H1 (cell line): ENCODE measurements at regions of chr5 and their contacts with region 1.

Region 1: DNA sequence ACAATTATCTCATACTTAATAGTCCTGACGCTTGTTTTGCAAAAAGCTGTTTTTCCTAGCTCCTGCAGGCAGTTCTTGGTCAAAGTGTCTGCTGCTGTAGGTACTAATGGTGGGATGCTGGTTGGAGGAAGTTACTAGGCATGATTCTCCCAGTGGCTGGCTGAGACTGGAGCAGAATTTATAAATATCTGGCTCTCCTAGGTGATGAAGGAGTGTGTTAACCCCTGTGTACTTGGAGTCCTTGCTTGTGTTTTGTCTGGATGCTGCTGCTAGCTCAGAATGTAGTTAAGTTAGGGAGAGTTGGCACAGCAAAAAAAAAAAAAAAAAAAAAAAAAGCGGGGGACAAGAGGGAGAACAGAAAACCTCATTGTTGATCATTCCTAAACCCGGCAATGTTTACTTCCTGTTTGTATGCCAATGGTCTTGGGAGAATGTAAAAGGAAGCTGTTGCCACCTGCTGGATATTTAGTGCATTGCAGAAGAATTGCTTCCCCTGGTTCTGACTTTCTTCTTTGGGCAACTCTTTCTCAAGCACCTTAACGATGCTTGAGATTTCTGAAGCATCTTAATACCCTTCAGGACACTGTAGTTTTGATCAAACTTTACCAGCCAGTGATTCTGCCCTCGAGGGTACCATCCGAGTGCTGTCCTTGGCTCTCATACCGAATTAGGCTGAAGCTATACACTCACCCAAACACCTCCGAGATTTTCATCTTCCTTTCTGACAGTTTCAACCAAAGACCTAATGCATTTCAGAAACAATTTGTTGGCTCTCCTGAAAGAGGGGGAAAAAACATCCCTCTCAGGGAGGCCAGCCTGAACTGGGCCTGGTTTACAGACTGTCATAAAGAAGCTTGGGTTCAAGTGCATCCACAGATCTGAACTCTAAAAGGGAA is 71.7 kb upstream of the WWC1 start:
- DNase-seq: peak; percentile 51 to 71
- H3K4me3 ChIP-seq: no peak overlapping the region
- H3K27ac ChIP-seq: peak overlapping the region; percentile 62
- H3K4me1 ChIP-seq: peaks cover 6 to 21% (median 13%) of the 10 kb centered on the region in 4 experiments
- H3K27me3 ChIP-seq: no peaks in the 10 kb centered on the region
- CTCF ChIP-seq: peak in 2 of 3 experiments; percentile 88 to 90; a peak in 3 of 4 replicates
- EP300 ChIP-seq: no peak
- POLR2A ChIP-seq: no peak
- RAD21 ChIP-seq: peak; percentile 95 to 97

Region 2: DNA sequence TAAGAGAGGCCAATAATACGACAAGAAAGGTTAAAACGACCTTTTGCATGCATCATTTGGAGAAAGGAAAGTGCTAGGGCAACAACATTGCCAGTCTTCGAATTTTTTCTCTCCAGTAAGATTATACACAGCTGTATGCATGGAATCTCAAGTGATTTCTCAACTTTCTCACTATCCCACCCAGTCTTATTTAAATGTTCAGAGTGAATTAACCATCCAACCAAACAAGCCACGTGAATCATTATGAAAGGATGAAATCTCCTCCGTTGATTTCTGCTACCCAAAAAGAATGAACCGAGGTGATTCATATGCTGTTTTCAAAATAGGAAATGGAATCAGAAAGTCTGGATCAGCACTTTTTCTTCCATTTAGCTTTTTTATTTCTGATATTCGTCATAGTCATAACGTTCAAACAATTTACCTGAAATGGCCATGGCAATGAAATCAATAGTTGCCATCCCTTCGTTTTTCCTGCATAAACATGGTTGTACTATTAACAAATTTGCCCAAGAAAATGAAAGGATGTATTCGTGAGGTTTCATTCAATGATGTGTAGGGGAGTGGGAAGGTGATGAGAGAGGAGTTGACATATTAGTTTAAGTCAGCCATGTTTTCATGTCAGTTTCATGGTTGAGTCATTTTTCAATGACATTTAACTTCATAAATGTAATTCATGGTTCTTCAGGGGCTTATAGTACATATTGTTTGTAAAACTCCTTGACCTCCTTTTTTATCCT is 99.2 kb before region 1 on chr5:
- CTCF ChIA-PET with region 1: interaction called, 38 read pairs
- POLR2A ChIA-PET with region 1: no interaction called
- DNase-seq: no peak
- H3K4me3 ChIP-seq: no peak overlapping the region
- H3K27ac ChIP-seq: no peak overlapping the region
- H3K4me1 ChIP-seq: peaks cover 3 to 7% (median 3%) of the 10 kb centered on the region in 4 experiments; a peak in 6 of 7 replicates
- H3K27me3 ChIP-seq: no peaks in the 10 kb centered on the region
- CTCF ChIP-seq: no peak
- EP300 ChIP-seq: no peak
- POLR2A ChIP-seq: no peak
- RAD21 ChIP-seq: no peak

Region 3: DNA sequence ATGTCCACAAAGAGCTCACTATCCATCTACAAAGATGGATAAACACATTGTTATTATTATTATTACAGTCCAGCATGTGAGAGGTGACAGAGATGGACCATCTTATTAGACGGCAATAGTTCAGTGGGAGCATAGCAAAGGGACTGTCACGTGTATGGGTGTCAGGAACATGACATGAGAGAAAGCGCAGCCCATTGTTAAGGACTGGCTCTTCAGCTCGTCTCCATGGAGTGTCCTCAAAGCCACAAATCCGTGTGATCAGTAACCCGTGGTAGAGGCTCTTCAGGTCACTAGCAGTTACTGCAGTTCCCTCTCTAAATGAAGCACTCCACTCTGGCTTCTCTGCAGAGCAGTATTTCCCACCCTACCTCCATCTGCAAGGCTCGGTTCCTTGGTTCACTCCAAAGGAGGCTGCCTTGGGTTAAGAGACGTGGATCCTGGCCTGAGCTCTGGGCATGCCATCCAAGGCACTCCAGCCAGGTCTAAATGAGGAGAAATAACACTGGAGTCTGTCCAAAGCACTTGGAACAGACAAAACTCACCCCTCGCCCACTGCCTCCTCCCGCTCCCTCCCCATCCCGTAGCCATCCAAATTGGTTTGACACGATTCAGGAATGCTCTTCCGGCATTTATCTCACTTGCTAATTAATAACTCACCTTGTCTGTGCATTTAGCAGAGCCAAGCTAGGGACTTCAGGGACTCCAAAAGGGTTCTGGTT is 50.6 kb before region 1 on chr5:
- CTCF ChIA-PET with region 1: interaction called, 16 read pairs
- POLR2A ChIA-PET with region 1: no interaction called
- DNase-seq: no peak
- H3K4me3 ChIP-seq: no peak overlapping the region
- H3K27ac ChIP-seq: no peak overlapping the region
- H3K4me1 ChIP-seq: peaks cover 5 to 10% (median 7%) of the 10 kb centered on the region in 4 experiments; a peak in 5 of 7 replicates
- H3K27me3 ChIP-seq: no peaks in the 10 kb centered on the region
- CTCF ChIP-seq: no peak
- EP300 ChIP-seq: no peak
- POLR2A ChIP-seq: no peak
- RAD21 ChIP-seq: no peak

Region 4: GRCh38 chr5:168204165-168204564 is 15.6 kb before region 1 on chr5:
- CTCF ChIA-PET with region 1: interaction called, 15 read pairs
- POLR2A ChIA-PET with region 1: no interaction called
- DNase-seq: no peak
- H3K4me3 ChIP-seq: no peak overlapping the region
- H3K27ac ChIP-seq: no peak overlapping the region
- H3K4me1 ChIP-seq: peaks cover 0 to 4% (median 0%) of the 10 kb centered on the region in 4 experiments; a peak in 1 of 7 replicates
- H3K27me3 ChIP-seq: no peaks in the 10 kb centered on the region
- CTCF ChIP-seq: no peak
- EP300 ChIP-seq: no peak
- POLR2A ChIP-seq: no peak
- RAD21 ChIP-seq: no peak